Activated CD4-positive, alpha-beta memory T cell treated with anti-CD3 and anti-CD28 coated beads for 36 hours (primary cell): ENCODE measurements at regions of chr2 and their contacts with region 1.

Region 1: GRCh38 chr2:74529357-74530238 is at the starts of genes AUP1 and HTRA2:
- DNase-seq: peak; percentile 97
- H3K4me3 Mint-ChIP-seq: peak within 1 kb of the TSS; percentile 98
- H3K27ac Mint-ChIP-seq: peak within 1 kb of the TSS; percentile 91
- H3K4me1 Mint-ChIP-seq: peaks cover 39% of the 10 kb centered on the region
- H3K27me3 Mint-ChIP-seq: no peaks in the 10 kb centered on the region
- total RNA-seq, gene AUP1: 92.1 to 98.0 TPM
- total RNA-seq, gene HTRA2: 70.6 to 72.3 TPM

Region 2: GRCh38 chr2:74223941-74224770 is 305.4 kb before region 1 on chr2:
- CTCF ChIA-PET with region 1: no interaction called
- POLR2A ChIA-PET with region 1: no interaction called
- intact Hi-C with region 1: no loop called
- DNase-seq: no peak
- H3K4me3 Mint-ChIP-seq: no peak overlapping the region
- H3K27ac Mint-ChIP-seq: peak overlapping the region; percentile 30
- H3K4me1 Mint-ChIP-seq: peaks cover 4% of the 10 kb centered on the region
- H3K27me3 Mint-ChIP-seq: no peaks in the 10 kb centered on the region

Region 3: DNA sequence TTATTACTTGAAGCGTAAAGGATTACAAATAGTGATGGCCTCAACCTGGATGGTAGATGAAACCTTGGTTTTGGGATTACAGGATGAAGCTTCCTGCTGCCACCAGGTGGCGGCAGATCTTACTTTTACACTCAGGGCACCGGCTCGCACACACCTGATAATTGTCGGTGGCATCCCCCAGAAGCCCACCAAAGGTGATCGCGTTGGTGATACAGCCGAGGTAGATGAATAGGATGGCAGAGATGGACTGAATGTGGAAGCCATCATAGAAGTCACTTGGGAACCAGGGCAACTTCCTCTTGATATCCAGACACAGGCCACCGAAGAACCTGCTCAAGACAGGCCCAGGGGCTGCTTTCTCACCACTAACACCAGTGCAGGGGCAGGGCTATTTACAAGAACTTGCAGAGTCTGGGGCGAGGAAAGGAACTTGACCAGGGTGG is 279.4 kb before region 1 on chr2:
- CTCF ChIA-PET with region 1: interaction called, 5 read pairs
- POLR2A ChIA-PET with region 1: no interaction called
- intact Hi-C with region 1: loop called (anchors 1 kb)
- DNase-seq: peak; percentile 67
- H3K4me3 Mint-ChIP-seq: no peak overlapping the region
- H3K27ac Mint-ChIP-seq: no peak overlapping the region
- H3K4me1 Mint-ChIP-seq: no peaks in the 10 kb centered on the region
- H3K27me3 Mint-ChIP-seq: no peaks in the 10 kb centered on the region

Region 4: GRCh38 chr2:74472086-74472944 is 57.3 kb before region 1 on chr2 and contains the start of gene MRPL53:
- CTCF ChIA-PET with region 1: interaction called, 4 read pairs
- POLR2A ChIA-PET with region 1: interaction called, 4 read pairs
- intact Hi-C with region 1: loop called (anchors 2 kb)
- DNase-seq: peak; percentile 96
- H3K4me3 Mint-ChIP-seq: peak within 1 kb of the TSS; percentile 96
- H3K27ac Mint-ChIP-seq: peak within 1 kb of the TSS; percentile 96
- H3K4me1 Mint-ChIP-seq: peaks cover 19% of the 10 kb centered on the region
- H3K27me3 Mint-ChIP-seq: no peaks in the 10 kb centered on the region
- total RNA-seq, gene MRPL53: 117 to 121 TPM

Region 5: DNA sequence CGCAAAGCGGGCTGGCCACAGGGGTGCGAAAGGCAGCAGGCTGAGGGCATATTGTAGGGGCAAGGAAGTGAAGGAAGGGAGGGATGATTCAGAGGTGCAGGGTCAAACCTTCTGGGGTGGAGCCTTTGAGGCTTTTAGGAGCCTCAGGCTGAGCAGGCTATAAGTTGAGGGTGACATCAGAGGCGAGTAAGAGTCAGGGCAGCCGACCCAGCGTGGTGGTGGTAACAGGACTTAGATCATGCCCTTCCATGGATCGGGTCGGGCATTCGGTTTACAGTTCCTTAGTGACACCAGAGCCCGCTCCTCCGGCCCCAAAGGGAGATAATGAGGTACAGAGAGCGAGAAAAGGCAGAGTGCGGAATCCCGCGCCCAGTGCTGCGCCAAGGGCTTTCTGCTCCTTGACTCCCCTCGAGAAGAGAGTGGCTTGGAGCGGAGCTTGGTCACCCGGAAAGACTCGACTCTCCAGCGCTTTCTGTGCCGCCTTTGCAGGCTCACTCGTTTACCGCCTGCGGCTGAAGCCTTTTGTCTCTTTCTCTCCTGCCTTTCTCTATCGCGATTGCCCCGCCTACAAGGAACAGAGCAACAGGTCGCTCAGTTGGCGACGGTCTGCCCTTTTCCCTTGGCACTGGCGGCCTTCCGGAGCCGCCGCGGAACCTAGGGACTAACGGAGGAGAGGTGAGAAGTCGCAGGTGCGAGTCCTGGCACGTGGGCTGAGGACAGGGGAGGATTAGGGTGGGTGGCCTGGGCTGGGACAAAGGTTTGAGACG is 30.9 kb before region 1 on chr2:
- CTCF ChIA-PET with region 1: interaction called, 9 read pairs
- POLR2A ChIA-PET with region 1: interaction called, 5 read pairs
- intact Hi-C with region 1: loop called (anchors 5 kb)
- DNase-seq: peak; percentile 58
- H3K4me3 Mint-ChIP-seq: peak overlapping the region; percentile 75
- H3K27ac Mint-ChIP-seq: peak overlapping the region; percentile 20
- H3K4me1 Mint-ChIP-seq: peaks cover 35% of the 10 kb centered on the region
- H3K27me3 Mint-ChIP-seq: peaks cover 51% of the 10 kb centered on the region

Region 6: DNA sequence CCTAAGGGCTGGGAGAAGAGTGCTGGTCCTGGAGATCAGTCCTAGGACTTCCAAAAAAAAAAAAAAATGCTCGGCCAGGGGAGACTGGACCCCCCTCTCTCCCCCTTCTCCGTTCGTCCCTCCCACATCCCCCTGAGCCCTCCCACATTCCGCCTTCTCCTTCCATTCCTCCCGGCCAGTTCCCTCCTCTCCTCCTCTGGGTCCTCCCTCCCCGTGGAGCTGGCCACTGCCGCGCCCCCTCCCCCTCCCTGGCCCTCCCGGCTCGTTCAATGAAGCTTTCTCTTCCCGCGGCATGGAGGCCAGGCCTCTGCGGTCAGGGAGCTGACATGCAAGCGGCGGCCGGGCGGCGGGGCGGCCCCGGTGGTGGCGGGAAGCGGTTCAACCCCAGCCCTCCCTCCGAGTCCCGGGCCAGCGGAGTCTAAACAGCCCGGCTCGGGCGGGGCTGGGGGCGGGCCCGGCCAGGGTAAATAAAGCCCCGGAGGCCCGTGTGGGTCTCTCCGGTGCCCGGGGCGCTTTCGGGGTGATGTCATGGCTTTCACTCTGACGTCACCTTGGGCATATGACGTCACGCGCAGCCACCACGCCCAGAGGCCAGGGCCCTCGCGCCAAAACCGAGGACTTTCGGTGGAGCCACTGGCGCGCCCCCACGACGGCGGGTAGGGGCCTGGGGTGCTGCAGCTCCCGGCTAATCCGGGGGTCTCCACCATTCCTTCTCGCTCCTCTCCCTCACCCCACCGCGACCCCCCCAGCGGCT is 24.5 kb after region 1 on chr2 and contains the start of gene LOXL3:
- CTCF ChIA-PET with region 1: interaction called, 4 read pairs
- POLR2A ChIA-PET with region 1: interaction called, 4 read pairs
- intact Hi-C with region 1: loop called (anchors 1 kb)
- DNase-seq: peak; percentile 87
- H3K4me3 Mint-ChIP-seq: peak within 1 kb of the TSS; percentile 95
- H3K27ac Mint-ChIP-seq: peak within 1 kb of the TSS; percentile 91
- H3K4me1 Mint-ChIP-seq: peaks cover 8% of the 10 kb centered on the region
- H3K27me3 Mint-ChIP-seq: peaks cover 10% of the 10 kb centered on the region
- total RNA-seq, gene LOXL3: 0.90 to 1.1 TPM

Region 7: GRCh38 chr2:74587664-74588277 is 58.2 kb after region 1 on chr2:
- CTCF ChIA-PET with region 1: interaction called, 66 read pairs
- POLR2A ChIA-PET with region 1: interaction called, 5 read pairs
- intact Hi-C with region 1: loop called (anchors 1 kb)
- DNase-seq: peak; percentile 75
- H3K4me3 Mint-ChIP-seq: no peak overlapping the region
- H3K27ac Mint-ChIP-seq: no peak overlapping the region
- H3K4me1 Mint-ChIP-seq: peaks cover 27% of the 10 kb centered on the region
- H3K27me3 Mint-ChIP-seq: peaks cover under 1% of the 10 kb centered on the region

Region 8: DNA sequence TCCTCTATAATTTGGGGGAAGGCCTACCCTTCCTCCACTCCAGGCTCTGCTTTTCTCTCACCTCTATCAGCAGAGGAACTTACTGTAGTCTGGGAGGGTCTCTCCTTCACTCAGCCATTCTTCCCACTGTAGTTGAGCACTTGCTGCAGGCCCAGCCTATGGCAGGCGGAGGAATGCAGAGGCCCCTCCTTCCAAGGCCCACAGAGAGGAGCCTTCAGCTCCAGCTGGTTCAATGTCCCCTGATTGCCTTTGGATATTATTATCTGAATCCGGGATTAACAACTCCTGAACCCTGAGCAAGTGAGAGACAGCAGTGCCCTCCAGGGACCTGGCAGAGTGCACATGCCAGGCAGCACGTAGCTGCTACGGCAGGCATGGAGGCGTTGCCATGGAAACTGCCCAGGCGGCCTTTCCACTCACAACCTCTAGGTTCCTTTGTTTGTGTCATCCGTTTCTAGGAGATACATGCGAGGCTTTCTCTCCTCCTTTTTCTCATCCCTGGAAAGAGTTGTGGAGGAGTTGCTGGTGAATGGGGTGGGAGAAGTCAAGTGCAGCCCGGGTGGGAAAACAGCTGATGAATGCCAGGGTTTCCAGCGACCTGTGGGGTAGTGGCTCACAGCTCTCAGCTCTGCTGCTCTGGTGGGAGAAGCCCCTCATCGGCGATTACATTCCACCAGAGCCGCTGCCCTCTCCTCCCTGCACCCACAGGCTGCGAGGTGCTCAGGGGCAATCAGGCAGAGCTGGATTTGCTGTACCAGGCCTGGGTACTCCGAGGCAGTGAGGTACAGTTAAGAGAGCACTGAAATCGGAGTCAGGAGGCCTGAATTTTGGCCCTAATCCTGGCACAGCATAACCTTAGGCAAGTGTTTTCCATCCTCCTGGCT is 249.0 kb after region 1 on chr2:
- CTCF ChIA-PET with region 1: no interaction called
- POLR2A ChIA-PET with region 1: no interaction called
- intact Hi-C with region 1: no loop called
- DNase-seq: no peak
- H3K4me3 Mint-ChIP-seq: no peak overlapping the region
- H3K27ac Mint-ChIP-seq: no peak overlapping the region
- H3K4me1 Mint-ChIP-seq: peaks cover 12% of the 10 kb centered on the region
- H3K27me3 Mint-ChIP-seq: no peaks in the 10 kb centered on the region